H1 (cell line): ENCODE measurements at regions of chr2 and their contacts with region 1.

Region 1: GRCh38 chr2:38508311-38509039 is 94.3 kb downstream of the HNRNPLL start:
- DNase-seq: peak; percentile 74 to 89
- H3K4me3 ChIP-seq: no peak overlapping the region
- H3K27ac ChIP-seq: no peak overlapping the region
- H3K4me1 ChIP-seq: peaks cover 0 to 3% (median 0%) of the 10 kb centered on the region in 4 experiments; a peak in 1 of 7 replicates
- H3K27me3 ChIP-seq: peaks cover 0 to 8% (median 6%) of the 10 kb centered on the region in 4 experiments; a peak in 3 of 7 replicates
- CTCF ChIP-seq: peak; percentile 45 to 92 (median 91)
- EP300 ChIP-seq: no peak
- POLR2A ChIP-seq: no peak
- RAD21 ChIP-seq: peak; percentile 97 to 99

Region 2: DNA sequence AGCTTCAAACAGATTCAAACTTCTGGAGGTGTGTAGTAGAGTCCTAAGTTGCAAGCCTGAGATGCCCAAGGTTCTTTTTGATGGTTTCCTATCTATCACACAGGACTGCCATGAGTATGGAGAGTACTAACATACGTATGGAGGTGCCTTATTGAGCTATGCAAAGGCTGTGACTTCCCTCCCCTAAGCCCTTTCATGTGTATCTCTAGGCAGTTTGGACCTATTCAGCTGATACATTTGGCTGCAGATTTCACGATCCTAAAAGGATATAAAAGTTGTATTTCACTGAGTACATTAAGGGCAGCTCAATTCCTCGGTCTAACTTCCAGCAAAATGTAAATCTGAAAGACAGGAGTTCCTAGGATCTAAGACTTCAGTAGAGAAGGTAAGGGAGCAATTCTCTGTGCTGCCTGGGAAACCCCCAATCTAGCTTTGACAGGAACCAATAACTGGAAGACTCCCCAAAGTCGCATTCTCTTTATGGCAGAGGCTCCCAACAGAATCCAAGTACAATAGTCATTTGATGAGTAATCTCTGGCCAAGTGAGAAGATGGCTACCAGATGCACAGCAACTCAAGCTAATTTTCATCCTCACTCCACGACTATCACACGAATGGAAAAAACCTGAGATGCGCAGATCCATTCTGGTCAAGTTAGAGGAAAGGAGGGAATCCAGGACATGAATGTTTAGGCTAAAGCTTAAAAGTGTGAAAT is 215.2 kb before region 1 on chr2:
- CTCF ChIA-PET with region 1: interaction called, 11 read pairs
- POLR2A ChIA-PET with region 1: no interaction called
- DNase-seq: no peak
- H3K4me3 ChIP-seq: no peak overlapping the region
- H3K27ac ChIP-seq: no peak overlapping the region; the same call in 1 of the 2 replicates
- H3K4me1 ChIP-seq: peaks cover 0 to 4% (median 0%) of the 10 kb centered on the region in 4 experiments; a peak in 1 of 7 replicates
- H3K27me3 ChIP-seq: no peaks in the 10 kb centered on the region
- CTCF ChIP-seq: no peak
- EP300 ChIP-seq: no peak
- POLR2A ChIP-seq: no peak; a peak in 1 of 3 replicates
- RAD21 ChIP-seq: no peak

Region 3: GRCh38 chr2:38315707-38316333 is 192.7 kb before region 1 on chr2:
- CTCF ChIA-PET with region 1: interaction called, 94 read pairs
- POLR2A ChIA-PET with region 1: interaction called, 4 read pairs
- DNase-seq: no peak
- H3K4me3 ChIP-seq: no peak overlapping the region
- H3K27ac ChIP-seq: no peak overlapping the region
- H3K4me1 ChIP-seq: no peaks in the 10 kb centered on the region
- H3K27me3 ChIP-seq: no peaks in the 10 kb centered on the region
- CTCF ChIP-seq: peak in 2 of 3 experiments; percentile 60 to 65; a peak in 2 of 4 replicates
- EP300 ChIP-seq: no peak
- POLR2A ChIP-seq: no peak
- RAD21 ChIP-seq: peak; percentile 87 to 89

Region 4: DNA sequence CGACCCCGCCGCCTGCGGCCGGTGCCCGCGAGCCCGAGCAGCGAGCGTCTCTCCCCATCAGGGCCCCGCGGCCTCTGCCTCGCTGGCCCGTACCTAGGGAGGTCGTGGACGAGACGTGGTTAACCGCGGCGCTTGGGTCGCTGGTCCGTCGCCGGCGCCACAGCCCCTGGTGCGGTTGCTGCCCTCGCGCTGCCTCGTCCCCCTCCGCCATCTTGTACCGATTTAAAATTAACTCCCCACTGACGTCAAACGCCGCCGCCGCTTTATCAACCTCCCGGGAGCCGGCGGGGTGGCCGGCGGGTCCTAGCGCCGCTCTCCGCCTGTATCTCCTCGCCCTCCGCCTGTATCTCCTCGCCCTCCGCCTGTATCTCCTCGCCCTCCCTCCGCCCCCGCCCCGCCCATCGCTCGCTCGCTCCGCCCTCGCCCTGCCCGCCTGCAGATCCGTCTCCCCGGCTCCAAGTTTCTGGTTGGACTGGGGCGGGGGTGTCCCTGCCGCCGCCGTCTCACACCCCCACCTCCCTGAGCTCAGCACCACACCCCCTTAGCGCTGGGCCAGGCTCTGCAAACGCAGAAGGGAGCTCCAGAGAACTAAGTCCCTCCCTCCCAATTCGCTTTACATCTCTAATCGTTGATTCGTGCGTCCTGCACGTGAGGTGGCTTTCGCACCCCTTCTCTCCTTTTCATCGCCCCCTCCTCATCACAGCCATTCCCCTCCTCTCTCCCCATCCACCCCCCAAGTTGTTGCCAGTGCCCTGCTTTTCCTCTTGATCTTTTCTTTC is 131.2 kb before region 1 on chr2 and contains the start of gene ATL2:
- CTCF ChIA-PET with region 1: interaction called, 10 read pairs
- POLR2A ChIA-PET with region 1: interaction called, 8 read pairs
- DNase-seq: peak; percentile 91 to 92
- H3K4me3 ChIP-seq: peak within 1 kb of the TSS; percentile 68 to 99 (median 96)
- H3K27ac ChIP-seq: peak within 1 kb of the TSS; percentile 96
- H3K4me1 ChIP-seq: peaks cover 0 to 5% (median 4%) of the 10 kb centered on the region in 4 experiments; a peak in 3 of 7 replicates
- H3K27me3 ChIP-seq: no peaks in the 10 kb centered on the region; a peak in 1 of 7 replicates
- CTCF ChIP-seq: no peak
- EP300 ChIP-seq: peak in 1 of 2 experiments; percentile 53; a peak in 1 of 3 replicates
- POLR2A ChIP-seq: peak; percentile 88 to 89
- RAD21 ChIP-seq: peak in 1 of 2 experiments; percentile 11; a peak in 1 of 4 replicates
- total RNA-seq, gene ATL2: 82.9 and 84.6 TPM in 2 replicates

Region 5: DNA sequence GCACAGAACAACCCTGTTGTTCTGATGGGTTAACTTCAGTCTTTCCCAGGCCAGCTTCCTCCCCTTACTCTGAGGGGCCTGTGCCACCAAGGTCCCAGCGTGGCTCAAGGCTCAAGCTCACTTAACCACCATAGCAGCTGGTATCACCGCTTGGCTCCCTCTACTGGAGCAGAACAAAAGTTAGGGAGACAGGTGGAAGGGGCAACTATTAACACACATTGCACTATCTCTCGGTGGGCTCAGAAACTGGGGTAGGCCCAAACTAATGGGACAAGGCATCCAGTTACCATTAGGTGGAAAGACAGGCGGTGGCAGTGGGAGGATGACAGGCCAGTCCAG is 42.7 kb before region 1 on chr2:
- CTCF ChIA-PET with region 1: interaction called, 34 read pairs
- POLR2A ChIA-PET with region 1: interaction called, 4 read pairs
- DNase-seq: peak; percentile 33 to 56
- H3K4me3 ChIP-seq: no peak overlapping the region
- H3K27ac ChIP-seq: no peak overlapping the region
- H3K4me1 ChIP-seq: no peaks in the 10 kb centered on the region
- H3K27me3 ChIP-seq: no peaks in the 10 kb centered on the region
- CTCF ChIP-seq: peak; percentile 48 to 91 (median 80)
- EP300 ChIP-seq: no peak
- POLR2A ChIP-seq: no peak
- RAD21 ChIP-seq: peak; percentile 79 to 88

Region 6: GRCh38 chr2:38498045-38498481 is 10.4 kb before region 1 on chr2:
- CTCF ChIA-PET with region 1: interaction called, 37 read pairs
- POLR2A ChIA-PET with region 1: no interaction called
- DNase-seq: no peak
- H3K4me3 ChIP-seq: no peak overlapping the region
- H3K27ac ChIP-seq: no peak overlapping the region
- H3K4me1 ChIP-seq: peaks cover 3 to 18% (median 6%) of the 10 kb centered on the region in 4 experiments
- H3K27me3 ChIP-seq: no peaks in the 10 kb centered on the region
- CTCF ChIP-seq: no peak
- EP300 ChIP-seq: no peak
- POLR2A ChIP-seq: no peak
- RAD21 ChIP-seq: no peak

Region 7: DNA sequence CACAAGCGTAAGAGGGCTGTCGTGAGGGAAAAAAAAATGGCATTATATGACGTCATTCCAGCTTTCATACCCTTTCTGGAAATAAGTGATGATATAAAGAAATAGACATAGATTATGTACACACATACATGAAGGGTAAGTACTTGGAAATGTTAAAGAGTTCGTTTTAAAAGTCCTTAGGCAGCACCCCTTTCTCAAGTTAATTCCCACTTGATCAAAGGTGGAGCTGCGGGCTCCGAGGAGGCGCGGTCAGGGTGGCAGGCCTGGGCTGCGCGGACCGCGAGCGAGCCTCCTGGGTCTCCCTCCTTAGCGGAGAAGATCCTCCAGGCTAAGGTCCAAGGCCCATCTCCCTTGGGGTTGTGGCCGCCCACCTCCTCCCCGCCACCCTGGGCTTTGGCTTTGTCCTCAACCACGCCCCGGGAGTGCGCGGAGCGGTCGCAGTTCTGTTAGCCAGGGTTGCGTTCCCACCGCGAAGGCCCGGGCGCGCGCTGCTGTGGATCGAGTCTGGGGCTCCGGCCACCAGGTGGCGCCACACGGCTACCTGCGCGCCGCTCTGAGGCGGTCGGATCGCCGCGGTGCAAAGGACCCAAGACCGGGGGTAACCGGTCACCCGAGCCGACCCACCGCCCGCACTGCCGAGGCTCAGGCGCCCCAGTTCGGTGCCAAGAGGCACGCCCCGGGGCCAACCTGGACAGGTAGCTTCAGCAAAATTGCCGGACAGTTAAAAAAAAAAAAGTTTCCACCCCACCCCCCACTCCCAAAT is 27.4 kb after region 1 on chr2:
- CTCF ChIA-PET with region 1: interaction called, 14 read pairs
- POLR2A ChIA-PET with region 1: interaction called, 3 read pairs
- DNase-seq: peak in 1 of 2 experiments; percentile 97
- H3K4me3 ChIP-seq: peak overlapping the region; percentile 28 to 63 (median 52)
- H3K27ac ChIP-seq: no peak overlapping the region
- H3K4me1 ChIP-seq: peaks cover 0 to 5% (median 1%) of the 10 kb centered on the region in 4 experiments; a peak in 5 of 7 replicates
- H3K27me3 ChIP-seq: peaks cover 0 to 12% (median 6%) of the 10 kb centered on the region in 4 experiments; a peak in 4 of 7 replicates
- CTCF ChIP-seq: peak; percentile 85 to 91 (median 86)
- EP300 ChIP-seq: no peak
- POLR2A ChIP-seq: no peak
- RAD21 ChIP-seq: peak; percentile 82 to 90